ENCODE measurements at regions of chr17 and their contacts with region 1.

Region 1: GRCh38 chr17:38676706-38677504 is 2.1 kb upstream of the EPOP start:
- DNase-seq: peak; percentile 80 to 86
- ATAC-seq: peak; percentile 81 to 89 (median 85)
- H3K4me3 ChIP-seq: no peak overlapping the region
- H3K27ac ChIP-seq: no peak overlapping the region
- H3K4me1 ChIP-seq: peaks cover 11% of the 10 kb centered on the region
- H3K27me3 ChIP-seq: peaks cover 0 to 39% (median 8%) of the 10 kb centered on the region in 3 donors
- CTCF ChIP-seq: peak; percentile 96

Region 2: DNA sequence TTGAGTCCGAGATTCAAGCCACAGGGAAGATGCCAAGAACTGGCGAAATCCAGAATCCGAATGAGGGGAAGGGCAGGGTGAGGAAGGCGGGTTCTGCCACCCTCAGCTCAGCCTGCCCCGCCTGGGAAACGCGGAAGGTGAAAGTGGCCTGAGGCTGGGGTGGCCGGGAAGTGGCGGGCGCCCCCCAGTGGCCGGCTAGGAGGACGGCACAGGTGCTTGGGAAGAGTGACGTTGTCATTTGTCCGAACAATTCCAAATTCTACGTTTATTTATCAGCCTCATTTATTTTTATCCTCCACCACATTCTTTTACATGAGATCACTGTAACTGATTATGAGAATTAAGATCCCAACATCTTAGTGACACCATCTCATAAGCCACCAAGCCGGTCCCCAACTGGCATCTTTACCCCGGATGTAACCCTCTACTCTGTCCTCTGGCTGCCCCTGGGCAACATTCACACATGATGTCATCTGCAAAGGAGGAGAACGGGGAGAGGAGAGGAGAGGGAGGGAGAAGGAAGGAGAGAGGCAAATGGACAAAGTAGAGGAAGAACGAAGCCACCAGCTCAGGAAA is 92.5 kb before region 1 on chr17:
- intact Hi-C with region 1: no loop called
- DNase-seq: peak; percentile 75
- ATAC-seq: peak; percentile 85 to 97 (median 90)
- H3K4me3 ChIP-seq: no peak overlapping the region
- H3K27ac ChIP-seq: no peak overlapping the region
- H3K4me1 ChIP-seq: peaks cover 4% of the 10 kb centered on the region
- H3K27me3 ChIP-seq: peaks cover 0 to 51% (median 5%) of the 10 kb centered on the region in 3 donors
- CTCF ChIP-seq: peak; percentile 88

Region 3: GRCh38 chr17:38628441-38628840 is 48.5 kb before region 1 on chr17:
- intact Hi-C with region 1: no loop called
- DNase-seq: no peak
- ATAC-seq: no peak
- H3K4me3 ChIP-seq: no peak overlapping the region
- H3K27ac ChIP-seq: no peak overlapping the region
- H3K4me1 ChIP-seq: no peaks in the 10 kb centered on the region
- H3K27me3 ChIP-seq: peaks cover 0 to 3% (median 2%) of the 10 kb centered on the region in 3 donors
- CTCF ChIP-seq: no peak

Region 4: GRCh38 chr17:38735161-38735997 is 58.5 kb after region 1 on chr17:
- intact Hi-C with region 1: loop called (anchors 1 to 2 kb)
- DNase-seq: peak; percentile 74 to 84
- ATAC-seq: peak; percentile 27 to 63 (median 48)
- H3K4me3 ChIP-seq: no peak overlapping the region
- H3K27ac ChIP-seq: no peak overlapping the region
- H3K4me1 ChIP-seq: peaks cover 15% of the 10 kb centered on the region
- H3K27me3 ChIP-seq: no peaks in the 10 kb centered on the region
- CTCF ChIP-seq: peak; percentile 81

Measured in psoas muscle (tissue), 8 donors.